Posterior cingulate gyrus (tissue), 11 donors: ENCODE measurements at regions of chr1 and their contacts with region 1.

Region 1: GRCh38 chr1:108746372-108747205 is at the start of gene STXBP3:
- DNase-seq: peak; percentile 97 to 100 (median 99)

Region 2: GRCh38 chr1:108691942-108692723 is 54.5 kb before region 1 on chr1 and contains the start of gene PRPF38B:
- intact Hi-C with region 1: loop called (anchors 2 kb)
- DNase-seq: peak; percentile 94 to 99 (median 96)

Region 3: DNA sequence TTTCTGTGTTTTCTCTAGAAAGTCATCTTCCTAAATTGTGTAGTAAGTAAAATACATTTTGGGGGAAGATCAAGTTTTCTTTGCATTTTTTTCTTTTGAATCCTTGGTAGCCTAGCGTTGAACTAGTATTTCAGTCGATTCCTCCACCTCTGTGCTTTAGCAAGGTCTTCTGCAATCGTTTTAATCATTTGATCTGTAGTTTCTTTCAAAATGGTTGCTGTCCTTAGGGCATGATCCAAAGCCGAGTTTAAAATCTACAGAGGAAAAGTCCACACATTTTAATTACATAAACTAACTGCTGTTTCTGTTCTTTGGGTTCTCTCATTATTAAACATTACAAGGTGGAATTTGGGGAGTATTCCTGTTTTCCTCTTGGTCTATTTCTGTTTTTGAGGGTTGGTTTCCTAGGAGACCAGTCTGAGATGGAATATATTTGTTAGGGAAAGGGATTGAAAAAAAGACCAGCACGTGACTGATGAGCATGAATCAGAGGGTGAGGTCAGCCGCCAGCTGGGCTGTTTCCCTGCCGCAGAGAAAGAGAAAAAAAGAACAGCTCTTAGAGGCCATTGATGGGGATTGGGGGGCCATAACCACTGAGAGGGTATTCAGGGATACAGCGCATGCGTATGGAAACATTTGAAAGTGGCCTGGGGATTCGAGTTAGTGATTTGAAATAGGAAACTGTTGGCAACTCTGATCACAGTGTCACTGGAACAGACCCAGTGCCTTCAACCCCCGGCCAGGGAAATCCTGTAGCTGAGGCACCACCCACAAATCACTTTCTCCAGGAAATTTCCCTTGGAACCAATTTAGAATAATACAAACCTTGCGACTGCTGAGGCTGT is 69.7 kb after region 1 on chr1:
- intact Hi-C with region 1: loop called (anchors 5 kb)
- DNase-seq: peak; percentile 63 to 96 (median 78)

Region 4: DNA sequence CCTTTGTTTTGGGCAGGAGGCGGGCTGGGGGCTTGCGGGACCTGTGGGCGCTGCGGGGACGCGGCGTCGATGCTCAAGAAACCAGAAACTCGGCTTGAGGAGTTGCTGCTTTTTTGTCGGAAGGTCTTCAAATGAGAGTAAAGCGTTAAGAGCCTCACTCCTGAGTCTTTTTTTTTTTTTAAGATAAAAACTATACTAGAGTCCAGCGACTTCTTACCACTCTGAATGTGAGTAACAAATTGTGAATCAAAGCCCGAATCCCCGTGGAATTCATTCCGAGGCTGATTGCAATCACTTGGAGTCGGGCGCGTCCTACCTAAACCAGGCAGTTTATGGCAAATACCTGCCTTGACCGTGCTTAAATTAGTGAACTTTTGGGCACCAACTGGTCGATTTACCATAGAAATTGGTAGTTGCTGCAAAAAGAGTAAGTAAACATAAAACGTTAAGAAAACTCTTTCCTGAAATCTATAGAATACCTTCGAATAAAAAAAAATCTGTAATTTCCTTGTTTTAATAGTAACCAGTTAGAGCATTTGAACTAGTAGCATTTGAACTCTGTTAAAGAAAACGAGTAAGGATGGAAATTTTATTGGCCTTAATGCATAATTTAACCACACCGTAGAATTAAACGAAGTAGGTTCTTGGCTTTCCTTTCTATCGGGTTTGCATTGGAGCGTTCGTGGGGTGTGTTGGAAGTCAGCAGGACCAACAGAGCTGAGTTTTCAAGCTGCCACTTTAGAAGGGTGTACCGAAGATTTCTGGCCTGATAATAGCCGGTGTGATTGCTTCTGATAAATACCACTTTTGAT is 131.0 kb after region 1 on chr1:
- intact Hi-C with region 1: loop called (anchors 5 kb)
- DNase-seq: peak in 2 of 10 donors; percentile 29 to 86

Region 5: DNA sequence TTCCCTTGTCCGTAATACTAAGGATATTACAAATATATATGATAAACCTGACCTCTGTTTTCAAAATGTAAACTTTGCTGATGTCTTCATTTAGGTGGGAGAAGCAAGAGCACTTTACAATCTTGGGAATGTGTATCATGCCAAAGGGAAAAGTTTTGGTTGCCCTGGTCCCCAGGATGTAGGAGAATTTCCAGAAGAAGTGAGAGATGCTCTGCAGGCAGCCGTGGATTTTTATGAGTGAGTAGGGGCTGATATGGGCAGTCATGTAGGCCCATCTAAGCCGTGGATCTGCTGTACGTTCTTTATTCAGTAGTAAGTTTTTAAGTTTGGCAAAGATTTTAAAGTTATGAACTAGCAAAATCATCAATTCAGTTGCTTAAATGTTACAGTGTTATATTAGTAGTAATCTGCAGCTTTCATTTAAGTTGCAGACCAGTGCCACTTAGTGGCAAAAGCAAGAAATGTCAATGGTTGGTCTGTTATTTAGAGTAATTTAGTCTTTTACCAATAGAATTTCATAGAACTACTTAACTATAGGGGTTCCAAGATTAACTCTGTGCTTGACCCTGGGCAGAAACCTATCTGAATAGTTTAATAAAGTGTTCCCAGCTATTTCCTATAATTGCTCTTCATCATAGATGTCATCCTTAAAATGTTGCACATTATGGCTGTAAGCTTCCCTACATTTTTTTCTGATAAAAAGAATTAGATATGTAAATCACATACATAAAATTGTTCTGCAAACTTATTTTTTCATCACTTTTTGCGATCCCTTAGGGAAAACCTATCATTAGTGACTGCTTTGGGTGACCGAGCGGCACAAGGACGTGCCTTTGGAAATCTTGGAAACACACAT is 151.5 kb after region 1 on chr1:
- intact Hi-C with region 1: loop called (anchors 2 kb)
- DNase-seq: peak in 1 of 10 donors; percentile 42

Region 6: GRCh38 chr1:109910123-109910962 is 1163.8 kb after region 1 on chr1 and contains the start of gene CSF1:
- intact Hi-C with region 1: no loop called
- DNase-seq: peak; percentile 57 to 95 (median 82)